Activated CD4-positive, alpha-beta T cell treated with anti-CD3 and anti-CD28 coated beads, Interleukin-2, amount 10 ng/mL, durations not matched to agents 24 days and 14 days (primary cell): ENCODE measurements at regions of chr5 and their contacts with region 1.

Region 1: GRCh38 chr5:134041570-134042411 is 37.0 kb upstream of the VDAC1 start:
- DNase-seq: peak; percentile 71
- H3K4me3 Mint-ChIP-seq: no peak overlapping the region
- H3K27ac Mint-ChIP-seq: peak overlapping the region; percentile 15
- H3K4me1 Mint-ChIP-seq: peaks cover 34% of the 10 kb centered on the region
- H3K27me3 Mint-ChIP-seq: peaks cover 3% of the 10 kb centered on the region

Region 2: GRCh38 chr5:134004592-134005375 is 37.0 kb before region 1 on chr5 and contains the start of gene VDAC1:
- intact Hi-C with region 1: loop called (anchors 2 kb)
- DNase-seq: peak; percentile 95
- H3K4me3 Mint-ChIP-seq: peak within 1 kb of the TSS; percentile 93
- H3K27ac Mint-ChIP-seq: peak within 1 kb of the TSS; percentile 96
- H3K4me1 Mint-ChIP-seq: peaks cover 40% of the 10 kb centered on the region
- H3K27me3 Mint-ChIP-seq: no peaks in the 10 kb centered on the region
- total RNA-seq, gene VDAC1: 508 and 515 TPM in 2 replicates

Region 3: DNA sequence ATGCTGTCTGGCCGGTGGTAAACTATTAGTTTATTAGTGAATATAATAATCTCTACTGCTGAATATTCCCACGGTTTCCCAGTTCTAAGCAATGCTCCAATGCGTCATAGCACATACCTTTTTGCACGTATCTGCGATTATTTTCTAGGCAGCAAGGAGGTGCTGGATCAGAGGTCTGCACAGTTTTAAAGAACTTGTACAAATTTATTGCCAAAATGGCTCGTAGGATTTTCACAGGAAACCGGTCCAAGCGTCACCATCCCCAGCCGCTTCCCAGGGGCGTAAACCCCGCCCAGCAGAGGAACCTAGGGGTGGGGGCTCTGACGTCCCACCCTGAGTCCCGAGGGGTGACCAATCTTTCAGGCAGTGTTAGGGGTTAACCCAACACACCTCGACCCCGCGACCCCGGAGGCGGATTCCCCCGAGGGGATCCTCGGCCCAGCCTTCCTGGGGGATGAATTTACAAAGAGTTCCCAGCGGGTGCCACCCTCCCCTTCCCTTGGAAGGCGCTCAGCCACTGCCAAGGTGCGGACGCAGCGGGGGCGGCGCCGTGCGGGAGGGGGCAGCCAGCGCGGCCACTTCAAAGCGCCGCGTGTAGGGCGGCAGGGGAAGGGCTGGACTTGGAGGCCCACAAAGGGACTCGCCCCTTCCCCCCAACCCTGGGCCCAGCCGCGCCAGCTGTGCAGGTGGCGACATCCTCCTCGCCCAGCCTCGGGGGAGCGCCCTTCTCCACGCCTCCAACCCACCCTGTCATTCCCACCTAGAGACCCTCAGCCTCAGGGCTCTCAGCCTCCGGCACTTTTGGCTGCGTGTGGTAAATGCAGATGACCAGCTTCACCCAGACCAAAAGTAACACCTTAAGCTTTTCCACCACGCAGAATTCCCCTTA is 29.2 kb after region 1 on chr5:
- intact Hi-C with region 1: loop called (anchors 1 kb)
- DNase-seq: peak; percentile 78
- H3K4me3 Mint-ChIP-seq: peak overlapping the region; percentile 83
- H3K27ac Mint-ChIP-seq: peak overlapping the region; percentile 95
- H3K4me1 Mint-ChIP-seq: peaks cover 57% of the 10 kb centered on the region
- H3K27me3 Mint-ChIP-seq: peaks cover 3% of the 10 kb centered on the region

Region 4: GRCh38 chr5:134113902-134114875 is 72.4 kb after region 1 on chr5 and contains the start of gene TCF7:
- intact Hi-C with region 1: no loop called
- DNase-seq: peak; percentile 92
- H3K4me3 Mint-ChIP-seq: peak within 1 kb of the TSS; percentile 87
- H3K27ac Mint-ChIP-seq: peak within 1 kb of the TSS; percentile 89
- H3K4me1 Mint-ChIP-seq: peaks cover 63% of the 10 kb centered on the region
- H3K27me3 Mint-ChIP-seq: peaks cover 12% of the 10 kb centered on the region
- total RNA-seq, gene TCF7: 112 and 113 TPM in 2 replicates

Region 5: GRCh38 chr5:134125039-134126015 is 83.5 kb after region 1 on chr5:
- intact Hi-C with region 1: no loop called
- DNase-seq: peak; percentile 64
- H3K4me3 Mint-ChIP-seq: peak overlapping the region; percentile 79
- H3K27ac Mint-ChIP-seq: peak overlapping the region; percentile 91
- H3K4me1 Mint-ChIP-seq: peaks cover 79% of the 10 kb centered on the region
- H3K27me3 Mint-ChIP-seq: peaks cover 4% of the 10 kb centered on the region

Region 6: GRCh38 chr5:134140530-134141201 is 98.9 kb after region 1 on chr5:
- intact Hi-C with region 1: loop called (anchors 1 kb)
- DNase-seq: peak; percentile 88
- H3K4me3 Mint-ChIP-seq: no peak overlapping the region
- H3K27ac Mint-ChIP-seq: peak overlapping the region; percentile 46
- H3K4me1 Mint-ChIP-seq: peaks cover 52% of the 10 kb centered on the region
- H3K27me3 Mint-ChIP-seq: peaks cover 3% of the 10 kb centered on the region

Region 7: DNA sequence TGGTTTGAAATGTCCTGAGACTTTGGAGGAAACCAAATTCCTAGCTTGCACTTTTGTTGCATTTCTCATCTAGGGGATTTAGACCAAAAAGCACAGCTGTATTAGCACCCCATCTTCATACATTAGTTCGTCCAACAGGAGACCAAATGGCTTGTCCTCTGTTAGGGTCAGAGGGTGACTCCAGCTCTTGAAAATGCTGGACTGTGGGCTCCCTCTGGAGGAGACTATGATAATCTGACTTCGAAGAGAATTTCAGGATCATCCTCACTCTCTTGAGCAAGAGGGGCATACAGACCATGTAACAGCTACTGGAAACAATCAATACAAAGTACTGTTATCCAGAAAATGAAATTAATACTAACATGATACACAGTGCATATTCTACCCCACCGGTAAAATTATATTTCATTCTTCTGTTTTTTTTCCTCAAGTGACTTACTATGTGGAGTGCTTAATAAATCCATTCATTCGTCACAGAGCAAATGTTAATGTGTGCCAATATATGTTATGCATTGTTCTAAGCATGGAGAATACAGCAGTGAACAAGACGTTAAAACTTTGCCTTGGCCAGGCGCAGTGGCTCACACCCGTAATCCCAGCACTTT is 247.8 kb after region 1 on chr5:
- intact Hi-C with region 1: loop called (anchors 10 kb)
- DNase-seq: peak; percentile 79
- H3K4me3 Mint-ChIP-seq: no peak overlapping the region
- H3K27ac Mint-ChIP-seq: no peak overlapping the region
- H3K4me1 Mint-ChIP-seq: peaks cover 4% of the 10 kb centered on the region
- H3K27me3 Mint-ChIP-seq: peaks cover 27% of the 10 kb centered on the region